Colonic mucosa (tissue), 4 donors: ENCODE measurements at regions of chr2 and their contacts with region 1.

Region 1: GRCh38 chr2:177332041-177332991 is 60.3 kb upstream of the AGPS start:
- DNase-seq: peak; percentile 64
- H3K4me3 ChIP-seq: no peak overlapping the region
- H3K27ac ChIP-seq: no peak overlapping the region
- H3K4me1 ChIP-seq: no peaks in the 10 kb centered on the region
- H3K27me3 ChIP-seq: no peaks in the 10 kb centered on the region
- CTCF ChIP-seq: peak; percentile 44

Region 2: GRCh38 chr2:177056481-177056929 is 275.8 kb before region 1 on chr2:
- intact Hi-C with region 1: no loop called
- DNase-seq: no peak
- H3K4me3 ChIP-seq: no peak overlapping the region
- H3K27ac ChIP-seq: no peak overlapping the region
- H3K4me1 ChIP-seq: no peaks in the 10 kb centered on the region
- H3K27me3 ChIP-seq: no peaks in the 10 kb centered on the region
- CTCF ChIP-seq: no peak

Region 3: GRCh38 chr2:177164584-177165052 is 167.7 kb before region 1 on chr2:
- intact Hi-C with region 1: loop called (anchors 2 kb)
- DNase-seq: peak; percentile 92
- H3K4me3 ChIP-seq: peak overlapping the region; percentile 30
- H3K27ac ChIP-seq: peak overlapping the region; percentile 85
- H3K4me1 ChIP-seq: peaks cover 3% of the 10 kb centered on the region
- H3K27me3 ChIP-seq: no peaks in the 10 kb centered on the region
- CTCF ChIP-seq: peak; percentile 99

Region 4: DNA sequence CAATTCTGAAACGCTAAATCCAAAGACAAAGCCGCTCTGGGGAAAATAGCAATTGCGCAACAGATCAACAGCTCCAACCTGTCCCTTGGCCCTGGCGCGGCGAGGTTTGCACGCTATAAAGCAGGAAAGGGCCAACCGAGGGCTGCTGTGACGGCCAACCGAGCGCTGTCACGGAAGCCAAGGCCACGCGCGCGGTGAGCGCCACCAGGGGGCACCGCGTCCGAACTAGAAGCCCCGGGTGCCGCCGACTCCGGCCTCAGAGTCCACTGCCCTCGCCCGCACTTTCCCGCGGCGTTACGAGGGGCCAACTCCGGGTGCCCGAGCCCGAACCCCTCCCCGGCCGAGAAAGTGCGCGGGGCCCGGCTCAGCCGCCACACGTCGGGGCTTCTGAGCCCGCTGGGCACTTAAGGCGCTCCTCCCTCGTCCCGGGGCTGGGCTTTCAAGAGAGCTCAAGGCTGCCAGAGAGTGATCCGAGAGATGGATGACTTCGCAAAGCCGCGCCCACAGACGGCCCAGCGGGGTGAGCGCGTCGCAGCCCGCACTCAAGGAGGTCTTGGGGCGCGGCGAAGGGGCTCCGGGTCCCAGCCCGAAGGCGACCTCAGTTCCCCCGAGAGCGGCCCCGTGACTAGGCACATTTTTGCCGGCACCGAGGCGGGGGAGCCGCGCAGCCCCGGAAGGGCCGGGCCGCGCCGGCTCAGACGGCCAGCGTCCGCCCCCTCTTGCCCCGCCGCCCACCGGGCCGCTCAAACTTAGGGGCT is 68.7 kb before region 1 on chr2:
- intact Hi-C with region 1: loop called (anchors 5 kb)
- DNase-seq: peak; percentile 100
- H3K4me3 ChIP-seq: peak overlapping the region; percentile 94
- H3K27ac ChIP-seq: peak overlapping the region; percentile 100
- H3K4me1 ChIP-seq: no peaks in the 10 kb centered on the region
- H3K27me3 ChIP-seq: no peaks in the 10 kb centered on the region
- CTCF ChIP-seq: peak; percentile 79

Region 5: GRCh38 chr2:177419274-177419673 is 87.0 kb after region 1 on chr2:
- intact Hi-C with region 1: loop called (anchors 2 kb)
- DNase-seq: no peak
- H3K4me3 ChIP-seq: no peak overlapping the region
- H3K27ac ChIP-seq: no peak overlapping the region
- H3K4me1 ChIP-seq: no peaks in the 10 kb centered on the region
- H3K27me3 ChIP-seq: no peaks in the 10 kb centered on the region
- CTCF ChIP-seq: no peak

Region 6: GRCh38 chr2:177604271-177605065 is 272.2 kb after region 1 on chr2:
- intact Hi-C with region 1: loop called (anchors 5 kb)
- DNase-seq: peak; percentile 62
- H3K4me3 ChIP-seq: no peak overlapping the region
- H3K27ac ChIP-seq: no peak overlapping the region
- H3K4me1 ChIP-seq: peaks cover 3% of the 10 kb centered on the region
- H3K27me3 ChIP-seq: no peaks in the 10 kb centered on the region
- CTCF ChIP-seq: peak; percentile 42

Region 7: DNA sequence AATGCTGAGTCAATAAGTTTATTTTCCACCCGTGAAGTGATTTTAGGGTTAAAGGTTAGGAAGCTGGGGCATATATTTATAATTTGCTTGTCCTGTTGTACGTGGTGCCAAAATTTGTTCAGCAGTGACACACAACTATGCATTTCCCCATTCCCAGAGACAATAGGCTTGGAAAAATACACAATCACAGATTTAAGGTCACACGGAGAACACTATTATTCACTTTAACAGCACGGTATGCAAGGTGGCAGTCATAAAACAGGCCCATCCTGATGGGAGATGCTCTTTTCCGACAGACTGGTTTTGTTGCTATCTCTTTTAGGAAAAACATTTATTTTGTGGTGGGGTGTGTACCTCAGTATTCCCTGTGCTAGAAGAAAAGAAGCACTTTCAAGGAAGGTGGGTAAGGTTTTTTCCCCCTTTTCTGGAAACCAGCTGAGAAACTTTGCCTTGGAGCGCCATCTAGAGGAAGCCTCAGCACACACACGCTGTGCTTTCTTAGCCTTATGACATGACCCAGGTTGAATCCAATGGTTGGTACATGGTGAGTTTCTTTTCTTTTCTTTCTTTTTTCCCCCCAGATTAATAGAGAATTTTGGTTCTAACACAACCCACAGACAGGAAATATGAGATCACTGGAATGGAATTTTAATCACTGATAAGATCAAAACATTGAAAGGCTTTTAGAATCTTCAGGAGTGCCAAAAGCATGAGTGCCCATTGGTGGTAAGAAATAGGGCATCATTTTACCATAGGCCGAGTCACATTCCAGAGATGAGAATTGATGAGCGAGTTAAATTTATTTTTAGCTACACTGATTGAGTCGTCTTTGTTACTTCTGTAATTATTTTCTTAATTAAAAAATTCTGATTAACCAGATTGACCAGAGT is 392.3 kb after region 1 on chr2:
- intact Hi-C with region 1: loop called (anchors 5 kb)
- DNase-seq: peak; percentile 59
- H3K4me3 ChIP-seq: no peak overlapping the region
- H3K27ac ChIP-seq: no peak overlapping the region
- H3K4me1 ChIP-seq: no peaks in the 10 kb centered on the region
- H3K27me3 ChIP-seq: no peaks in the 10 kb centered on the region
- CTCF ChIP-seq: peak; percentile 84